Heart right ventricle (tissue), 16 donors: ENCODE measurements at regions of chr3 and their contacts with region 1.

Region 1: DNA sequence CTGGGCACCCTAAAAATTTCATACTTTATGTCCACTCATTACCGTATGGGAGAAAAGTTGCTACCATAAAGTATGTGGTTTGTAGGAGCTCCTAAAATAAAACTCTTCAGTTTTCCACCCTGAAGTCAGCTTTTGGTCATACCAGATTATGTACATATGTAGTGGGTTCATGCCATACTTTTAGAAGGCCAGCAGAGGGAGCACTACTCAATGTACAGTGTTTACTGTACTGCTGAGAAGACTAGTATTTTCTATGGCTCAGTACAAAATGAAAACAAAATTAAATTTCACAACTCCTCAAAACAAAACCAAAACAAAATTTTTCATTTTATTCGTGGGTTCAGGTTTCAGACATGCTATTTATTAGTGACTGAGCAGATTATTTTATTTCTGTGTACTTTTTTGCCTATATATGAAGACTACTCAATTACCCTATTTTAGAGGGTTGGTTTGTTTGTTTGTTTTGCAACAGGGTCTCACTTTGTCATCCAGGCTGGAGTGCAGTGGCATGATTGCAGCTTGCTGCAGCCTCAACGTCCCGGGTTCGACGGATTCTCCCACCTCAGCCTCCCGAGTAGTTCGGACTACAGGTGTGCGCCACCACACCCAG is 24.3 kb downstream of the NXPE3 start:
- DNase-seq: peak in 1 of 2 donors; percentile 75
- ATAC-seq: peak; percentile 87 to 96 (median 92)
- H3K4me3 ChIP-seq: no peak overlapping the region
- H3K27ac ChIP-seq: no peak overlapping the region
- H3K4me1 ChIP-seq: peaks cover 0 to 10% (median 0%) of the 10 kb centered on the region in 9 donors
- H3K27me3 ChIP-seq: no peaks in the 10 kb centered on the region
- CTCF ChIP-seq: peak; percentile 77 to 92 (median 88)

Region 2: GRCh38 chr3:101512646-101513418 is 290.4 kb before region 1 on chr3 and contains the start of gene SENP7:
- intact Hi-C with region 1: no loop called
- DNase-seq: peak; percentile 88 to 90
- ATAC-seq: peak; percentile 87 to 93 (median 90)
- H3K4me3 ChIP-seq: peak within 1 kb of the TSS; percentile 67 to 99 (median 84)
- H3K27ac ChIP-seq: peak within 1 kb of the TSS; percentile 85 to 99 (median 94)
- H3K4me1 ChIP-seq: peaks cover 3 to 33% (median 17%) of the 10 kb centered on the region in 9 donors
- H3K27me3 ChIP-seq: peaks cover 0 to 11% (median 0%) of the 10 kb centered on the region in 7 donors
- CTCF ChIP-seq: no peak
- total RNA-seq, gene SENP7: 8.5 to 11.1 (median 10.0) TPM

Region 3: DNA sequence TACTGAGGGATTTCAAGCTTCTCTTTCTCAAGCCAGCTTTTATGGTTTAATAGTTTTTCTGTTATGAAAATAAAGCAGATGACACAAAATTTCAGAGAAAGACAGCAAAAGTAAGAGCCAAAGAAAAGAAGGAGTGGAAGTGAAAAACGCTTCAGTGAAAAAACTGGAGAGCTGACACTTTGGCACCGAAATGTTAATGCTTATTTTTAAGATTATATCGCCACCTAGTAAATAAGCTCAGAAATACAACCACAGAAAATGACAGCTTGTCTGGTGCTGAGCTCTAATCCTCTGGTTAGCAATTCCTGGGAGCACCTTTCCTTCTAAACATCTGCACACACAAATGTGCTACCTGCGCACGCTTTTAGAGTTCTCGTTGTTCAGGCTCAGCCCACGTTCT is 733.2 kb after region 1 on chr3:
- intact Hi-C with region 1: loop called in 8 of 10 experiments (anchors 5 to 10 kb)
- DNase-seq: no peak
- ATAC-seq: peak in 1 of 8 donors; percentile 45
- H3K4me3 ChIP-seq: no peak overlapping the region
- H3K27ac ChIP-seq: no peak overlapping the region
- H3K4me1 ChIP-seq: no peaks in the 10 kb centered on the region
- H3K27me3 ChIP-seq: peaks cover 0 to 8% (median 0%) of the 10 kb centered on the region in 7 donors
- CTCF ChIP-seq: peak in 7 of 9 donors; percentile 33 to 59 (median 49)

Region 4: DNA sequence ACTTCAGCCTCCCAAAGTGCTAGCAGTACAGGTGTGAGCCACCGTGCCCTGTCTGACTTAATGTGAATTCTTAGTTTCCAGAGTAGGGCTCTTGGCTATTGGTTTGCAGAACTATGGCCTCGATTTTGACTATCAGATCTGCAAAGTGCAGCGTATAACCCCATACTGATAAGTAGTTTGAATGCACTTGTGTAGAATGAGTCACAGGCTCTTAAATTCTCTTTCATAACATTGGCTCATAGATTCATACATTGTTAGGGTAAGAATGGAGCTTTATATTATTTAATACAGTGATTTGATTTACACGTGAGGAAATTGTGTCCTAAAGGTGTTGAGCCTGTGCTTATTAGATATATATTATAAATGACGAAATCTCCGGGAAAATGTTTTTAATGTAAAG is 741.5 kb after region 1 on chr3:
- intact Hi-C with region 1: loop called in 8 of 10 experiments (anchors 5 to 10 kb)
- DNase-seq: no peak
- ATAC-seq: no peak
- H3K4me3 ChIP-seq: no peak overlapping the region
- H3K27ac ChIP-seq: no peak overlapping the region
- H3K4me1 ChIP-seq: no peaks in the 10 kb centered on the region
- H3K27me3 ChIP-seq: peaks cover 0 to 17% (median 0%) of the 10 kb centered on the region in 7 donors
- CTCF ChIP-seq: no peak